ENCODE measurements at regions of chr9 and their contacts with region 1.

Region 1: GRCh38 chr9:31364171-31364570 is 1020.3 kb upstream of the ACO1 start:
- DNase-seq: no peak
- H3K4me3 ChIP-seq: no peak overlapping the region
- H3K27ac ChIP-seq: no peak overlapping the region
- H3K4me1 ChIP-seq: no peaks in the 10 kb centered on the region
- CTCF ChIP-seq: no peak

Region 2: GRCh38 chr9:31140316-31140715 is 223.9 kb before region 1 on chr9:
- CTCF ChIA-PET with region 1: no interaction called
- POLR2A ChIA-PET with region 1: no interaction called
- intact Hi-C with region 1: loop called (anchors 10 kb)
- DNase-seq: peak; percentile 22
- H3K4me3 ChIP-seq: no peak overlapping the region
- H3K27ac ChIP-seq: no peak overlapping the region
- H3K4me1 ChIP-seq: no peaks in the 10 kb centered on the region
- CTCF ChIP-seq: peak; percentile 72

Region 3: GRCh38 chr9:31335529-31336234 is 28.5 kb before region 1 on chr9:
- CTCF ChIA-PET with region 1: no interaction called
- POLR2A ChIA-PET with region 1: no interaction called
- intact Hi-C with region 1: no loop called
- DNase-seq: no peak
- H3K4me3 ChIP-seq: no peak overlapping the region
- H3K27ac ChIP-seq: peak overlapping the region; percentile 33
- H3K4me1 ChIP-seq: peaks cover 26% of the 10 kb centered on the region
- CTCF ChIP-seq: no peak

Region 4: DNA sequence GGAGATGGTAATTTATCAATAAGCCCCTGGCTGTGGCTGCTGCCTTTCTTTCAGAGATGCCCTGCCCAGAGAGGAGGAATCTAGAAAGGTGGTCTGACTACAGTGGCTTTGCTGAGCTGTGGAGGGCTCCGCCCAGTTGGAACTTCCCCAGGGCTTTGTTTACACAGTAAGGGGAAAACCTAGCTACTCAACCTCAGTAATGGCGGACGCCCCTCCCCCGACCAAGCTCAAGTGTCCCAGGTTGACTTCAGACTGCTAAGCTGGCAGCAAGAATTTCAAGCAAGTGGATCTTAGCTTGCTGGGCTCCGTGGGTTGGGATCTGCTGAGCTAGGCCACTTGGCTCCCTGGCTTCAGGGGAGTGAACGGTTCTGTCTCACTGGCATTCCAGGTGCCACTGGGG is 154.8 kb after region 1 on chr9:
- CTCF ChIA-PET with region 1: no interaction called
- POLR2A ChIA-PET with region 1: no interaction called
- intact Hi-C with region 1: no loop called
- DNase-seq: no peak
- H3K4me3 ChIP-seq: no peak overlapping the region
- H3K27ac ChIP-seq: no peak overlapping the region
- H3K4me1 ChIP-seq: no peaks in the 10 kb centered on the region
- CTCF ChIP-seq: no peak

Measured in OCI-LY7 (cell line).